Activated CD8-positive, alpha-beta T cell treated with anti-CD3 and anti-CD28 coated beads for 36 hours (primary cell): ENCODE measurements at regions of chr19 and their contacts with region 1.

Region 1: DNA sequence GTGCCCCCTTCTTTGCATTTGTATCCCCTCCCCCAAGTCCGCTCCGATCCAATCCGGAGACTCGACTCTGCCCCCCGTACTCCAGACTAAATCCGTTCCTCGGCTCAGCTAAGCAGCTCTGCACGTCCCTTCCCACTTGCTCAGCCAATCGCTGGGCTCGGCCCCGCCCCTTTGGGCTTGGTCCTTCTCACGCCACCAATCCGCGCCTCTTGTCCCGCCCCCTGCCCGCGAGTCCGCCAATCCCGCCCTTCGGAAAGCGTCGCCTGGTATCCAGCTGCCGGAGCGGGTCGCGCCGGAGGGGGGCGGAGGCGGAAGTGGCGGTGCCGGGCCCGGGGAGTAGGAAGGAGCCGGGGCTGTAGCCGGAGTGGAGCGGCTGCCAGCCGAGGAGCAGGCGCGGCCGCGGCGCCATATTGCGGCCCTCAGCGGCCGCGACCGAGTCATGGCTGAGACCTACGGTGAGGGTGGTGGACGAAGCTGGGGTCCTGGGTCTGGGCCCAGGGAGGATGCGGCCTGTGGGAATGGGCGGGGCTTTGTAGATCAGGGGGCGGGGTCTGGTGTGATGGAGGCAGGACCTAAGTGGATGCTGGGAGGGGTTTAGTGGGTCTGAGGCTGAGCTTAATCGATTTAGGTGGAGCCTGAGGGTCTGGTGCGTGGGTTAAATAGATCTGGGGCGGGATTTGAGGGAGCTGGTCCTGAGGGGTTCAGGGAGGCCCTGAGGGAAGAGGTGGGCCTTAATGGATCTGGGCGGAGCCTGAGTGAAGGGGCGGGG is at the start of gene RAB4B:
- DNase-seq: peak; percentile 100
- ATAC-seq: peak; percentile 77
- H3K4me3 Mint-ChIP-seq: peak within 1 kb of the TSS; percentile 92
- H3K27ac Mint-ChIP-seq: peak within 1 kb of the TSS; percentile 96
- H3K4me1 Mint-ChIP-seq: peaks cover 50% of the 10 kb centered on the region
- H3K27me3 Mint-ChIP-seq: no peaks in the 10 kb centered on the region
- CTCF ChIP-seq: no peak
- total RNA-seq, gene RAB4B: 39.7 to 42.3 TPM

Region 2: GRCh38 chr19:40662921-40663694 is 115.0 kb before region 1 on chr19:
- CTCF ChIA-PET with region 1: interaction called, 13 read pairs
- POLR2A ChIA-PET with region 1: no interaction called
- intact Hi-C with region 1: no loop called
- DNase-seq: peak; percentile 93
- ATAC-seq: peak; percentile 83
- H3K4me3 Mint-ChIP-seq: peak overlapping the region; percentile 69
- H3K27ac Mint-ChIP-seq: peak overlapping the region; percentile 76
- H3K4me1 Mint-ChIP-seq: peaks cover 21% of the 10 kb centered on the region
- H3K27me3 Mint-ChIP-seq: no peaks in the 10 kb centered on the region
- CTCF ChIP-seq: peak; percentile 58

Region 3: GRCh38 chr19:40702337-40703012 is 75.6 kb before region 1 on chr19:
- CTCF ChIA-PET with region 1: no interaction called
- POLR2A ChIA-PET with region 1: no interaction called
- intact Hi-C with region 1: no loop called
- DNase-seq: no peak
- ATAC-seq: no peak
- H3K4me3 Mint-ChIP-seq: no peak overlapping the region
- H3K27ac Mint-ChIP-seq: no peak overlapping the region
- H3K4me1 Mint-ChIP-seq: no peaks in the 10 kb centered on the region
- H3K27me3 Mint-ChIP-seq: no peaks in the 10 kb centered on the region
- CTCF ChIP-seq: no peak

Region 4: GRCh38 chr19:40762754-40763470 is 15.2 kb before region 1 on chr19:
- CTCF ChIA-PET with region 1: interaction called, 4 read pairs
- POLR2A ChIA-PET with region 1: interaction called, 12 read pairs
- intact Hi-C with region 1: no loop called
- DNase-seq: peak; percentile 64
- ATAC-seq: peak; percentile 57
- H3K4me3 Mint-ChIP-seq: peak overlapping the region; percentile 5
- H3K27ac Mint-ChIP-seq: peak overlapping the region; percentile 77
- H3K4me1 Mint-ChIP-seq: peaks cover 68% of the 10 kb centered on the region
- H3K27me3 Mint-ChIP-seq: no peaks in the 10 kb centered on the region
- CTCF ChIP-seq: no peak

Region 5: GRCh38 chr19:40798223-40798996 is 20.3 kb after region 1 on chr19:
- CTCF ChIA-PET with region 1: interaction called, 15 read pairs
- POLR2A ChIA-PET with region 1: interaction called, 15 read pairs
- intact Hi-C with region 1: loop called (anchors 2 kb)
- DNase-seq: peak; percentile 100
- ATAC-seq: peak; percentile 35
- H3K4me3 Mint-ChIP-seq: peak overlapping the region; percentile 95
- H3K27ac Mint-ChIP-seq: peak overlapping the region; percentile 97
- H3K4me1 Mint-ChIP-seq: peaks cover 51% of the 10 kb centered on the region
- H3K27me3 Mint-ChIP-seq: no peaks in the 10 kb centered on the region
- CTCF ChIP-seq: no peak

Region 6: DNA sequence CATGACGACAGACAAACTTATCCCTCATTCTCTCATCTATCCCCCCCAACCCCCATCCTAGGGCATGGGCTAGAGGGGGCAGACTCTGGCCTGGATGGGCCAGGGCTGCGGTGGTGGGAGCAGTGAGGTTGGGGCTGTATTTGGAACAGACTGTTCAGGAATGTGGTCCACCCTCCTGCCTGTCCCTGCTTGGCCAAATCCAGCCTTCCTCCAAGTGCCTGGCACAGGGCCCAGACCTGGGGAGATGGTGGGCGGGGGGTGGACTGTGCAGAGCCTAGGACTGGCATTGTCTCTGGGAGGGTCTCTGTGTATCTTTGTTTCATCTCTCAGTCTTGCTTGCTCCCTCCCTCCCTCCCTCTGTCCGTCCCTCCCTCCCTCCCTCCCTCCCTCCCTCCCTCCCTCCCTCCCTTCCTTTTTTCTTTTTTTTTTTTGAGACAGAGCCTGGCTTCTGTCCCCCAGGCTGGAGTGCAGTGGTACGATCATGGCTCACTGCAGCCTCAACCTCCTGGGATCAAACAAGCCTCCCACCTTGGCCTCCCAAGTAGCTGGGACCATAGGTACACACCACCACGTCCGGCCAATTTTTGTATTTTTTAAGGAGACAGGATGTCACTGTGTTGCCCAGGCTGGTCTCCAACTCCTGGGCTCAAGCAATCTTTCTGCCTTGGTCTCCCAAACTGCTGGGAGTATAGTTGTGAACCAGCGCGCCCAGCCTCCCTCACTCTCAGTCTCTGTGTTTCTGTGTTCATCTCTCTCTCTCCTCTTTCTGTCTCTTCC is 35.2 kb after region 1 on chr19:
- CTCF ChIA-PET with region 1: interaction called, 32 read pairs
- POLR2A ChIA-PET with region 1: interaction called, 3 read pairs
- intact Hi-C with region 1: no loop called
- DNase-seq: no peak
- ATAC-seq: no peak
- H3K4me3 Mint-ChIP-seq: no peak overlapping the region
- H3K27ac Mint-ChIP-seq: no peak overlapping the region
- H3K4me1 Mint-ChIP-seq: peaks cover 26% of the 10 kb centered on the region
- H3K27me3 Mint-ChIP-seq: no peaks in the 10 kb centered on the region
- CTCF ChIP-seq: no peak

Region 7: DNA sequence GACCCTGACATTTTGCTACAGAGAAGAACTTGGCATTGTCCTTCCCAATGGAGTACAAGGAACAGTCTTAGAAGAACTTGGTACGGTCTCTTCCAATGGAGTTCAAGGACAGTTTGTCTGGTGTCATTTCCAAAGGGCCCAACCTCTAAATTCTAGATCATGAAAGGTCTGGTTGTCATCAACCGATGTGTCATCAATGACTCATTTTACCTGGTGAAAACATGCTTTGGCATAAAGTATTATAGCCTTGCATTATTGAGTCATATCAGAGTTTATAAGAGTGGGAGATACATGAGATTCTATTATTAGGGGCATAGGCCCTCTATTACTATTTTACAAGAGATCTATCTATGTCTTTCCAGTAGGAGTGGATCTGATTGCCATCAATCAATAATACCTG is 217.2 kb after region 1 on chr19:
- CTCF ChIA-PET with region 1: no interaction called
- POLR2A ChIA-PET with region 1: no interaction called
- intact Hi-C with region 1: no loop called
- DNase-seq: no peak
- ATAC-seq: peak; percentile 47
- H3K4me3 Mint-ChIP-seq: no peak overlapping the region
- H3K27ac Mint-ChIP-seq: no peak overlapping the region
- H3K4me1 Mint-ChIP-seq: no peaks in the 10 kb centered on the region
- H3K27me3 Mint-ChIP-seq: peaks cover 2% of the 10 kb centered on the region
- CTCF ChIP-seq: no peak